PC-3 (cell line): ENCODE measurements at regions of chr1 and their contacts with region 1.

Region 1: DNA sequence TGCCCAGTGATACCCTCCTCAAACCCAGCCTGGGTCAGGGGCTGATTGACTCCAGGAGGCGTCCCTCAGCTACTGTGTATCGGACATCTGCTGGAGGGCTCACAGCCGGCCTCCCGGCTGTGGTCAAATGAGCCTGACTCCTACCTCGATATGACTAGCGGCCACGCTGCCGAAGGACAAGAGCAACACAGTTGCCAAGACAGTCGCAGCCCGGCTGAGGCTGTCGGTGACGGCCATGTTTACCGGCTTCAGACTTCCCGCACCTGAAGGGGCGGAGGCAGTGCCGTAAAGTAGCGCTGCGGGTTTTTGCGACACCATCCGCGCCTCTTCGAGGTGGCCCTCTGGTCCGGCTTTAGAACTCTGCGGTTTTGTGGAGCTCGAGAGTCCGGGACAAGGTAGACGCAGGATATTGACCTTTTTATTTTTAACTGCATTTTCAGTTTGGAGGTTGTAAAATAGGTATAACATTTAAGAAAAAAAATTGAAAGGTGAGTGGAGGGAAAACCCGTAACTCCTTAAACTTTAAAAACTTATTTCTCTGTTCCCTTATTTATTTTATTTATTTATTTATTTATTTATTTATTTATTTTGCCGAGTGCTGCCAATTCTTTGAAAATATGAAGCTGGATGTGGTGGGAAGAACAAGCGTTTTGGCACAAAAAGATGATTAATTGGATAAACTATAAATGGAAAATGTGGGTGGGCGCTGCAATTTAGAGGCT is at the start of gene PIGK:
- DNase-seq: peak; percentile 94
- ATAC-seq: peak; percentile 94
- H3K4me3 ChIP-seq: peak within 1 kb of the TSS; percentile 93
- H3K27ac ChIP-seq: peak within 1 kb of the TSS; percentile 53
- H3K4me1 ChIP-seq: peaks cover 9% of the 10 kb centered on the region; the same call in 1 of the 2 replicates
- H3K27me3 ChIP-seq: no peaks in the 10 kb centered on the region
- CTCF ChIP-seq: 0 out of 2 replicates have a peak, but pooled peaks have one; percentile 10
- total RNA-seq, gene PIGK: 24.8 and 40.3 TPM in 2 replicates

Region 2: GRCh38 chr1:77313491-77313890 is 94.2 kb after region 1 on chr1:
- CTCF ChIA-PET with region 1: no interaction called
- POLR2A ChIA-PET with region 1: no interaction called
- intact Hi-C with region 1: loop called (anchors 1 kb)
- DNase-seq: peak; percentile 41
- ATAC-seq: peak; percentile 70
- H3K4me3 ChIP-seq: no peak overlapping the region
- H3K27ac ChIP-seq: no peak overlapping the region
- H3K4me1 ChIP-seq: peaks cover under 1% of the 10 kb centered on the region
- H3K27me3 ChIP-seq: no peaks in the 10 kb centered on the region
- CTCF ChIP-seq: peak; percentile 63

Region 3: GRCh38 chr1:77394166-77394565 is 174.8 kb after region 1 on chr1:
- CTCF ChIA-PET with region 1: no interaction called
- POLR2A ChIA-PET with region 1: no interaction called
- intact Hi-C with region 1: loop called (anchors 5 kb)
- DNase-seq: peak; percentile 85
- ATAC-seq: peak; percentile 84
- H3K4me3 ChIP-seq: peak overlapping the region; percentile 47; the same call in 1 of the 2 replicates
- H3K27ac ChIP-seq: peak overlapping the region; percentile 96
- H3K4me1 ChIP-seq: peaks cover 27% of the 10 kb centered on the region
- H3K27me3 ChIP-seq: no peaks in the 10 kb centered on the region
- CTCF ChIP-seq: no peak

Region 4: DNA sequence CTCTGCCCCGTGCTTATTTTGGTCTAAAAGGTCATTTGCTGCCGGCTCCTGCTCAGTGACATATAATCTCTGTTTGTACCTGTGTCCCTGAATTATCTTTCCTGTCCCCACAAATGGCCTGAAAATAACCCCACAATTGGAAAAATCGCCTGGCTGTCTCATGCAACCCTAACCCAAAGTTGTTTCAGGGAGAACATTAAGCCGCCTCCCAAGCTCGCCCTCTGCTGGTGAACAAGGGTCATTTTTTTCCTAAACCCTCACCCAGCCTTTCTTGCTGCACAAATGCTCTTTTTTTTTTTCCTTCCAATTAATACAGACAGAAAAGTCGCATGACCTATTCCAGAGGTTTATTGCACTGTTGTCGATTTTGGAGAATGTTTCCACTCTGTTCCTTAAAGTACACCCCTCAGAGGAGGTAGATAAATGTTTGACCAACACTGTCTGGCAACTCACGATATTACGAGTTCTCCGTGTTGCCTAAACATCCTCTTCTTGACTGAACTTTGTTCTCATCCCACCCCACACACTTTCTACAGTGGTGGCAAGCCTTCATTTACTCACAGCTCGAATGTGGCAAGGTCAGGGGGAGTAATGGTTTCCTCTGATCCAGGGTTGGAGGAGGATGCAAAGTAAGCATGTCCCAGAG is 314.5 kb after region 1 on chr1:
- CTCF ChIA-PET with region 1: no interaction called
- POLR2A ChIA-PET with region 1: no interaction called
- intact Hi-C with region 1: loop called (anchors 1 kb)
- DNase-seq: peak; percentile 65
- ATAC-seq: peak; percentile 32
- H3K4me3 ChIP-seq: no peak overlapping the region
- H3K27ac ChIP-seq: no peak overlapping the region
- H3K4me1 ChIP-seq: peaks cover 31% of the 10 kb centered on the region
- H3K27me3 ChIP-seq: no peaks in the 10 kb centered on the region
- CTCF ChIP-seq: peak; percentile 88